Activated CD4-positive, alpha-beta memory T cell treated with anti-CD3 and anti-CD28 coated beads, Interleukin-2, amount 10 ng/mL, durations not matched to agents 7 days and 5 days (primary cell): ENCODE measurements at regions of chr11 and their contacts with region 1.

Region 1: DNA sequence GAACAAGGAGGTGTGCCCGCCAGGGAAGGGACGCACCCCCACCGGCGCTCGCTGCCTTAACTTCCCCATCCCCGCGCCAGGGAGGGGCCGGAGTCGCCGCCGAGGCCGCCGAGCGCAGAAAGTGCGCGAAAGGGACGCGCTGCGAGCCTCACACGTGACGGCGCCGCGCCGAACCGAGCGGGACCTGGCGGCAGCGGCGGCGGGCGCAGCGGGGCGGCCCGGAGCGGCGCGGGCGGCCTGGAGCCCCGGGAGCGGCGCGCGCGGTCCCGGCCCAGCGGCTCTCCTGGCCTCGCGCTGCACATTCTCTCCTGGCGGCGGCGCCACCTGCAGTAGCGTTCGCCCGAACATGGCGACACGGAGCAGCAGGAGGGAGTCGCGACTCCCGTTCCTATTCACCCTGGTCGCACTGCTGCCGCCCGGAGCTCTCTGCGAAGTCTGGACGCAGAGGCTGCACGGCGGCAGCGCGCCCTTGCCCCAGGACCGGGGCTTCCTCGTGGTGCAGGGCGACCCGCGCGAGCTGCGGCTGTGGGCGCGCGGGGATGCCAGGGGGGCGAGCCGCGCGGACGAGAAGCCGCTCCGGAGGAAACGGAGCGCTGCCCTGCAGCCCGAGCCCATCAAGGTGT is at the start of gene SORL1:
- DNase-seq: peak; percentile 78
- H3K4me3 Mint-ChIP-seq: peak within 1 kb of the TSS; percentile 94
- H3K27ac Mint-ChIP-seq: peak within 1 kb of the TSS; percentile 90
- H3K4me1 Mint-ChIP-seq: peaks cover 86% of the 10 kb centered on the region
- H3K27me3 Mint-ChIP-seq: no peaks in the 10 kb centered on the region
- total RNA-seq, gene SORL1: 115 to 116 TPM

Region 2: DNA sequence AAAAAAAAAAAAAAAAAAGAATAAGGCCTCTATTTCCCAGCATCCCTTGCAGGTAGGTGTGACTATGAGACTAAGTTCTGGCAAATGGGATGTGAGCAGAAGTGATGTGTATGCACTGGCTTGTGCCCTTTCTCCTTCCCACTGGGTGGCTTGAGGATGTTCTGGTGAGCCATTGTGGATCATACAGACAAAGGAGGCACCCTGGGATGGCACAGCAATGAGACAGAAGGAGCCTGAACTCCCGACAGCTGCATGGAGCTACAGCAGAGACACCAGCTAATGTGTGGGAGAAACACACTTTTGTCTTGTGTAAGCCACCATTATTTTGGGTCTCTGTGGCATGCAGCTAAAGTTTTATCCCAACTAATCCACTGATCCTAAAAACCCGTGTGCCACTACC is 10.6 kb before region 1 on chr11:
- CTCF ChIA-PET with region 1: interaction called, 10 read pairs
- POLR2A ChIA-PET with region 1: interaction called, 7 read pairs
- DNase-seq: no peak
- H3K4me3 Mint-ChIP-seq: no peak overlapping the region
- H3K27ac Mint-ChIP-seq: no peak overlapping the region
- H3K4me1 Mint-ChIP-seq: peaks cover 34% of the 10 kb centered on the region
- H3K27me3 Mint-ChIP-seq: no peaks in the 10 kb centered on the region

Region 3: GRCh38 chr11:121482231-121483129 is 30.4 kb after region 1 on chr11:
- CTCF ChIA-PET with region 1: interaction called, 6 read pairs
- POLR2A ChIA-PET with region 1: interaction called, 53 read pairs
- DNase-seq: peak; percentile 77
- H3K4me3 Mint-ChIP-seq: peak overlapping the region; percentile 77
- H3K27ac Mint-ChIP-seq: peak overlapping the region; percentile 99
- H3K4me1 Mint-ChIP-seq: peaks cover 56% of the 10 kb centered on the region
- H3K27me3 Mint-ChIP-seq: no peaks in the 10 kb centered on the region

Region 4: DNA sequence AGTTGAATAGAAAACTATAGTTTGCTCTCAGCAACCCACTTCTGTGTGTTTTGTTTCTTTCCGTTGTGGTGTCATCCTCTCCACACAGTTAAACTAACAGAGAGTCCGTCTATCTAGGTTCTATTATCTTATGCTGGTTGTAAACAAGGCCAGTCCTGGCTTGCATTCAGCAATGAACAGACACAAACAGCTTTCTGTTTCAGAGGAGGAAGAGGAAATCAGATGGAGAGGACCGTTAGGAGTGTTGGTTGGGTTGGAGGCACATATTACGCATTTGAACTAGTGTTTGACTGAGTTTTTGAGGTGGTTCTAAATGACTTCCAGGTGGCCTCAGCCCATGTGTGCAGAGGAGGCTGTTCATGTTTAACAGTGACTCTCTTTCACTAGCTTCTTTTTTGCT is 130.2 kb after region 1 on chr11:
- CTCF ChIA-PET with region 1: interaction called, 3 read pairs
- POLR2A ChIA-PET with region 1: interaction called, 11 read pairs
- DNase-seq: peak; percentile 24
- H3K4me3 Mint-ChIP-seq: no peak overlapping the region
- H3K27ac Mint-ChIP-seq: peak overlapping the region; percentile 73
- H3K4me1 Mint-ChIP-seq: peaks cover 37% of the 10 kb centered on the region
- H3K27me3 Mint-ChIP-seq: no peaks in the 10 kb centered on the region